B cell (primary cell): ENCODE measurements at regions of chr3 and their contacts with region 1.

Region 1: GRCh38 chr3:71444028-71444860 is 139.3 kb downstream of the FOXP1 start:
- DNase-seq: peak; percentile 92
- ATAC-seq: peak; percentile 76
- H3K4me3 ChIP-seq: peak overlapping the region in 3 of 5 experiments; percentile 3 to 22 (median 6)
- H3K4me3 Mint-ChIP-seq: peak overlapping the region; percentile 70
- H3K27ac ChIP-seq: peak overlapping the region; percentile 90 to 92
- H3K27ac Mint-ChIP-seq: peak overlapping the region; percentile 96
- H3K4me1 ChIP-seq: peaks cover 83 to 85% of the 10 kb centered on the region in 2 donors
- H3K4me1 Mint-ChIP-seq: peaks cover 82% of the 10 kb centered on the region
- H3K27me3 ChIP-seq: no peaks in the 10 kb centered on the region
- H3K27me3 Mint-ChIP-seq: no peaks in the 10 kb centered on the region
- CTCF ChIP-seq: no peak

Region 2: DNA sequence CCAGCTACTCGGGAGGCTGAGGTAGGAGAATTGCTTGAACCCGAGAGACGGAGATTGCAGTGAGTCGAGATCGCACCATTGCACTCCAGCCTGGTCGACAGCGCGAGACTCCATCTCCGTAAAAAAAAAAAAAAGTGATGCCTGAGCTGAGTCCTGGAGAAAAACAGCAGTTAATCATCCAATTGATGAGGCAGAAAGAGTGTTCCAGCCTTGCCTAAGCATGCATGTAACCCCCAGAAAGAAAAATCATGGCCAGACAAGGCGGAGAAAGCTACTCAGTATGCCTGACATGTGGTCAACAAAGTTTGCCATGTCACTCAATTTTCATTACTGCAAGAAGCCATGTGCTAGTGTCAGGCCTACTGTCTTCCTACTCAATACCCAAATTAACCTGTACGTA is 538.8 kb before region 1 on chr3:
- CTCF ChIA-PET with region 1: no interaction called
- POLR2A ChIA-PET with region 1: no interaction called
- intact Hi-C with region 1: no loop called
- DNase-seq: no peak
- ATAC-seq: no peak
- H3K4me3 ChIP-seq: no peak overlapping the region
- H3K4me3 Mint-ChIP-seq: no peak overlapping the region
- H3K27ac ChIP-seq: no peak overlapping the region
- H3K27ac Mint-ChIP-seq: no peak overlapping the region
- H3K4me1 ChIP-seq: no peaks in the 10 kb centered on the region
- H3K4me1 Mint-ChIP-seq: no peaks in the 10 kb centered on the region
- H3K27me3 ChIP-seq: peaks cover 0 to 3% (median 0%) of the 10 kb centered on the region in 4 experiments
- H3K27me3 Mint-ChIP-seq: peaks cover 42% of the 10 kb centered on the region
- CTCF ChIP-seq: no peak

Region 3: GRCh38 chr3:71087143-71088018 is 356.9 kb before region 1 on chr3:
- CTCF ChIA-PET with region 1: interaction called, 4 read pairs
- POLR2A ChIA-PET with region 1: interaction called, 3 read pairs
- intact Hi-C with region 1: loop called (anchors 5 kb)
- DNase-seq: peak; percentile 82
- ATAC-seq: peak; percentile 67
- H3K4me3 ChIP-seq: peak overlapping the region in 1 of 5 experiments; percentile 39
- H3K4me3 Mint-ChIP-seq: peak overlapping the region; percentile 72
- H3K27ac ChIP-seq: peak overlapping the region; percentile 87 to 91
- H3K27ac Mint-ChIP-seq: peak overlapping the region; percentile 88
- H3K4me1 ChIP-seq: peaks cover 88 to 93% of the 10 kb centered on the region in 2 donors
- H3K4me1 Mint-ChIP-seq: peaks cover 86% of the 10 kb centered on the region
- H3K27me3 ChIP-seq: no peaks in the 10 kb centered on the region
- H3K27me3 Mint-ChIP-seq: no peaks in the 10 kb centered on the region
- CTCF ChIP-seq: no peak

Region 4: GRCh38 chr3:71210257-71211007 is 233.8 kb before region 1 on chr3:
- CTCF ChIA-PET with region 1: no interaction called
- POLR2A ChIA-PET with region 1: no interaction called
- intact Hi-C with region 1: no loop called
- DNase-seq: no peak
- ATAC-seq: no peak
- H3K4me3 ChIP-seq: no peak overlapping the region
- H3K4me3 Mint-ChIP-seq: no peak overlapping the region
- H3K27ac ChIP-seq: peak overlapping the region in 1 of 2 donors; percentile 8
- H3K27ac Mint-ChIP-seq: peak overlapping the region; percentile 51
- H3K4me1 ChIP-seq: peaks cover 31 to 35% of the 10 kb centered on the region in 2 donors
- H3K4me1 Mint-ChIP-seq: peaks cover 72% of the 10 kb centered on the region
- H3K27me3 ChIP-seq: no peaks in the 10 kb centered on the region
- H3K27me3 Mint-ChIP-seq: no peaks in the 10 kb centered on the region
- CTCF ChIP-seq: no peak

Region 5: DNA sequence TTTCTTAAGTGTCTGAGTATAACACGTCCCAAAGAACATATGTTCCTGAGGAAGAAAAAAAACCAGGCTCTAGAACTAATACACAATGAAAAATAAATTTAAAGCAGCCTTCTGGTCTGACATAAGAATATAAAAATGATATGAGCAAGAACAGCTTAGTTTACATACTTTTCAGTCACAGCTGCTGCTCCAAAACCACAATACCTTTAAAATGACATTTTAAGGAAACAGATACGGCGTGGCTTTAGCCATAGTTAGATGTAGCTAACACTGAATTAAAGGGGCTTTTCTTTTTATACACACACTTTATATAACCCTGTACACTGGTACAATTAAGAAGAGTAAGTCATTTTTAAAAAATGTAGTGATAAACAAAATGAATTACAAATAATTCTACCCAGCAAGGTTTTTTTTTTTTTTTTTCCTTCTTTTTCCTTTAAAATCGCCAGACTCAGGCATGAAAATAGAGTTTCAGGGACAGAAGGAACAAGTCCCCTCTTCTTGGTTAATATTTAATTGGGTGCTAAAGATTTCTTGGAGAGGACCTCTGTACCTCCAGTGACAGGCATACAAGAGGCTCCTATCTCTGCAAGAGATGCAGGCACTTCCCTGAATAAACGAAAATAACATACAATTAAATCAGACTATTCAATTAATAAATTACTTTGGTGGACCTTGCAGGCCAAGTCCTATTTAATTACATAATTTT is 126.3 kb before region 1 on chr3:
- CTCF ChIA-PET with region 1: no interaction called
- POLR2A ChIA-PET with region 1: no interaction called
- intact Hi-C with region 1: no loop called
- DNase-seq: no peak
- ATAC-seq: no peak
- H3K4me3 ChIP-seq: no peak overlapping the region
- H3K4me3 Mint-ChIP-seq: peak overlapping the region; percentile 52
- H3K27ac ChIP-seq: peak overlapping the region in 1 of 2 donors; percentile 51
- H3K27ac Mint-ChIP-seq: no peak overlapping the region
- H3K4me1 ChIP-seq: peaks cover 37 to 45% of the 10 kb centered on the region in 2 donors
- H3K4me1 Mint-ChIP-seq: peaks cover 36% of the 10 kb centered on the region
- H3K27me3 ChIP-seq: no peaks in the 10 kb centered on the region
- H3K27me3 Mint-ChIP-seq: no peaks in the 10 kb centered on the region
- CTCF ChIP-seq: no peak

Region 6: DNA sequence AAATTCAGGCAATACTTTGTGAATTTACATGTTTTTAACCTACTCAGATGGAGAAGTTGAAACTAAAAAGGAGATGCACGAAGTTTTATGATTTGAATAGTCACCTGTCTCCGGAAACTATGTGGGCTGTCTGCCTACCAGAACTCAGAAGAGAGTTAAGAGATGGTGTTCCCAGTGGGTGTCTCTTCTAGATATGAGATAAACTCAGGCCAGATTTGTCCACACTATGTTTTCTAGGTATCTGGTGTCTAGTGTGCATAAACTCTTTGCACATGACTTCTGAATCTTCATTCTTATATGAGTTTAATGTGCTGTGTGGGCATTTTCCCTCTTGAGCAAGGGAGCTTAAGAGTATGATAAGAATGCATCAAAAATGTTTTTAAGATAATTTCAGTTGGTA is 83.5 kb before region 1 on chr3:
- CTCF ChIA-PET with region 1: interaction called, 6 read pairs
- POLR2A ChIA-PET with region 1: no interaction called
- intact Hi-C with region 1: loop called (anchors 1 kb)
- DNase-seq: peak; percentile 82
- ATAC-seq: peak; percentile 61
- H3K4me3 ChIP-seq: peak overlapping the region; percentile 32 to 67 (median 48)
- H3K4me3 Mint-ChIP-seq: peak overlapping the region; percentile 89
- H3K27ac ChIP-seq: peak overlapping the region; percentile 78 to 87
- H3K27ac Mint-ChIP-seq: peak overlapping the region; percentile 95
- H3K4me1 ChIP-seq: peaks cover 83% of the 10 kb centered on the region in 2 donors
- H3K4me1 Mint-ChIP-seq: peaks cover 83% of the 10 kb centered on the region
- H3K27me3 ChIP-seq: no peaks in the 10 kb centered on the region
- H3K27me3 Mint-ChIP-seq: no peaks in the 10 kb centered on the region
- CTCF ChIP-seq: no peak

Region 7: GRCh38 chr3:71416876-71417275 is 27.4 kb before region 1 on chr3:
- CTCF ChIA-PET with region 1: interaction called, 8 read pairs
- POLR2A ChIA-PET with region 1: interaction called, 16 read pairs
- intact Hi-C with region 1: loop called (anchors 1 kb)
- DNase-seq: peak; percentile 75
- ATAC-seq: peak; percentile 50
- H3K4me3 ChIP-seq: peak overlapping the region in 1 of 5 experiments; percentile 7
- H3K4me3 Mint-ChIP-seq: peak overlapping the region; percentile 71
- H3K27ac ChIP-seq: peak overlapping the region; percentile 71 to 76
- H3K27ac Mint-ChIP-seq: peak overlapping the region; percentile 66
- H3K4me1 ChIP-seq: peaks cover 64 to 68% of the 10 kb centered on the region in 2 donors
- H3K4me1 Mint-ChIP-seq: peaks cover 78% of the 10 kb centered on the region
- H3K27me3 ChIP-seq: no peaks in the 10 kb centered on the region
- H3K27me3 Mint-ChIP-seq: no peaks in the 10 kb centered on the region
- CTCF ChIP-seq: peak; percentile 53

Region 8: DNA sequence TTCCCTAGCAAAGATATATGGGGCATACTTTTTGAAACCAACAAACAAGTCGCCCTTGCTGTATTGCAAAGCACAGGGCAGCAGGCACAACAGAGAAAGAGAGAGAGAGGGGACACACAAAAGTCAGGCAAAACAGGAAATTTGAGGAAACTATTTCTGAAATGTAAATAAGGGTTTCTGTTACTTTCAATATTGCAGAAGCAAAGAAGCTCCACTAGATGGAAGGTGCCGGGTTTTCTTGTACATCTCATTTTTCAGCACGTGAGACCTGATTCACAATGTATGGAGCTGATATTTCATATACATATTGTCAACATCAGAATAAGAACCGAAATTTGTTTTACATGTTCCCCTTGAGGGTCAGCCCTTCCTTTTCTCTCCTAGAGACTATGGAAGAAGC is 11.9 kb after region 1 on chr3:
- CTCF ChIA-PET with region 1: interaction called, 25 read pairs
- POLR2A ChIA-PET with region 1: interaction called, 15 read pairs
- intact Hi-C with region 1: loop called (anchors 1 kb)
- DNase-seq: peak; percentile 62
- ATAC-seq: peak; percentile 54
- H3K4me3 ChIP-seq: peak overlapping the region; percentile 9 to 53 (median 48)
- H3K4me3 Mint-ChIP-seq: peak overlapping the region; percentile 83
- H3K27ac ChIP-seq: peak overlapping the region; percentile 80 to 86
- H3K27ac Mint-ChIP-seq: peak overlapping the region; percentile 94
- H3K4me1 ChIP-seq: peaks cover 70 to 77% of the 10 kb centered on the region in 2 donors
- H3K4me1 Mint-ChIP-seq: peaks cover 76% of the 10 kb centered on the region
- H3K27me3 ChIP-seq: no peaks in the 10 kb centered on the region
- H3K27me3 Mint-ChIP-seq: no peaks in the 10 kb centered on the region
- CTCF ChIP-seq: peak; percentile 20

Region 9: DNA sequence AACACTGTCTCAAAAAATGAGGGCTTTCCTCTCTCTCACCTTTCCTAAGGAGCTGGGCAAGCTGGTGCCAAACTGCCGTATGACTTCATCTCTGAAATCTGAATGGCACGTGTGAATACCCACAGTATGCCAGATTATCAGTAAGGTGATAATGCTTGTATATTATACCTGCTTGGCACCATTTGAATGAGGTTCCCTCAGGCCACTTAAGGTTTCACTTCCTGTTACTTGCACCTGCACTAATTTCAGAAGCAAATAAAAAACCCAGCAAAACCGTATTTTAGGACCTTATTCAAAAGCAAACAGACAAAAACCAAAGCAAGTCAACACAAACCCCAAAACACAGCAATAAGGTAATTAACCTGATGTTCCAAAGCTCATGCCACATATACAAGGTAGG is 119.6 kb after region 1 on chr3:
- CTCF ChIA-PET with region 1: no interaction called
- POLR2A ChIA-PET with region 1: no interaction called
- intact Hi-C with region 1: loop called (anchors 5 kb)
- DNase-seq: peak; percentile 86
- ATAC-seq: peak; percentile 68
- H3K4me3 ChIP-seq: peak overlapping the region in 1 of 5 experiments; percentile 42
- H3K4me3 Mint-ChIP-seq: peak overlapping the region; percentile 72
- H3K27ac ChIP-seq: peak overlapping the region; percentile 51 to 53
- H3K27ac Mint-ChIP-seq: peak overlapping the region; percentile 60
- H3K4me1 ChIP-seq: peaks cover 42 to 56% of the 10 kb centered on the region in 2 donors
- H3K4me1 Mint-ChIP-seq: peaks cover 69% of the 10 kb centered on the region
- H3K27me3 ChIP-seq: peaks cover 0 to 4% (median 0%) of the 10 kb centered on the region in 4 experiments
- H3K27me3 Mint-ChIP-seq: peaks cover 8% of the 10 kb centered on the region
- CTCF ChIP-seq: no peak

Region 10: DNA sequence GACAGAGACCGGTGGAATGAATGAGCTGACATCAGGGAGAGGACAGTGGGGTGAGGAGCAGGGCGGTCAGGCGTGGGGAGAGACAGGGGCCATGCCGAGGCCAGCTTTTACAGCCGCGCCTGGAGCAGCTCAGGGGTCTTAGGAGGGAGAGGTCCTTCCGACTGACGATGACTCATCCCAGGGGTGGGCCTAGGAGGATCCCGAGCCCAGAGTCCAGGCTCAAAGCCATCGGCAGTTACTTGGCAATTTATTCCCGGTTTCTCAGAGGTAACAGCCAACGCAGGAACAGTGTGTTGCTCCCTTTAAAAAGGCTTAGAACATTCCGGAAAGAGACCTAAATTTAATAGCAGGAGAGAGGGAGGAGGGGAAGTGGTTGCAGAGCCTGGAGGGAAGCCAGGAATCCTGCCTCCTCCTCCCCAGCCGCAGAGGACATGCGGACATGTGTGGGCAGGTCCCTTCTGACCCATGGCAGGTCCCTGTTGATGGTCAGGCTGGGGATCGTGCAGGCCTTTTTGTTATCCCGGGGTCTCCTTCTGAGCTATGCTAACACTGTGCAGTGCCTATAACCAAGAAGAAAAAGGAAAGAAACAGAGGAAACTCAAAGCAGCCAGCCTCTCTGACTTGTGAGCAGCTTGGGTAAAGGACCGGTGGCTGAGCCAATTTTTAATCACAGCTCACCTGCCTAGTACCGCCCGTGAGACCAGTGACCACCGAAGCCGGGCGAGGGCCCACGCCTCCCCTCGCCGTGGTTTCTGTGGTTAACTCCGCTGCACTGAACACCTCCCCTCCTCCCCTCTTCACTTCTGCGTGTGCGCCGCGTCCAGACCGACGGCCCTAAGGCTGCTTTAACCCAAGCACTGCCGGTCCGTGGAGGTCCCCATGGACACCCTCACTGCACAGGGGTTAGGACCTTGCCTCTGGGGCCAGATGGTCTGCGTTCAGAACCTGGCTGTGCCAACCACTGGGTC is 733.1 kb after region 1 on chr3:
- CTCF ChIA-PET with region 1: no interaction called
- POLR2A ChIA-PET with region 1: no interaction called
- intact Hi-C with region 1: no loop called
- DNase-seq: peak; percentile 61
- ATAC-seq: peak; percentile 40
- H3K4me3 ChIP-seq: peak overlapping the region in 4 of 5 experiments; percentile 20 to 61 (median 36)
- H3K4me3 Mint-ChIP-seq: peak overlapping the region; percentile 88
- H3K27ac ChIP-seq: no peak overlapping the region
- H3K27ac Mint-ChIP-seq: peak overlapping the region; percentile 70
- H3K4me1 ChIP-seq: peaks cover 50 to 52% of the 10 kb centered on the region in 2 donors
- H3K4me1 Mint-ChIP-seq: peaks cover 65% of the 10 kb centered on the region
- H3K27me3 ChIP-seq: no peaks in the 10 kb centered on the region
- H3K27me3 Mint-ChIP-seq: peaks cover 13% of the 10 kb centered on the region
- CTCF ChIP-seq: no peak